ENCODE measurements at regions of chr2 and their contacts with region 1.

Region 1: GRCh38 chr2:101983928-101984327 is 7.8 kb upstream of the IL1R2 start:
- DNase-seq: peak; percentile 60
- H3K4me3 Mint-ChIP-seq: no peak overlapping the region
- H3K27ac Mint-ChIP-seq: no peak overlapping the region
- H3K4me1 Mint-ChIP-seq: peaks cover 42% of the 10 kb centered on the region
- H3K27me3 Mint-ChIP-seq: no peaks in the 10 kb centered on the region
- CTCF ChIP-seq: peak; percentile 33

Region 2: DNA sequence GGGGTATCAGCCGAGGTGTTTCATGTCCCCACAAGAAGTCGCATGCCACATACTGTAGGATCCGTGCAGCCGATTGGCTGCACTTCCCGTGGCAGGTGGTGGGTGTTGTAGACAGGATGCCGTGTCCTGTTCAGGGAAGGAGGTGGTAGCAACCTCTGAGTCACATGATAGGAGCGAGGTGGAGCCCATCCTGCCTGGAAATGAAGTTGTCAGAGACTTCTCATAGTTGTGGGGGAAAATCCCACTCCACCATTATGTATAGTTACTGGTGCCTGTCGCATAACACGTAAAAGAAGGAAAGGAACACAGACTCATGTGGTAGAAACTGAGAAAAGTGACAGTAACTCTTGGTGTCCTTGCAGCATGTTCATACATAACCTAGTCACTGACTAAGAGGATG is 83.6 kb before region 1 on chr2:
- CTCF ChIA-PET with region 1: no interaction called
- POLR2A ChIA-PET with region 1: no interaction called
- intact Hi-C with region 1: loop called (anchors 5 kb)
- DNase-seq: no peak
- H3K4me3 Mint-ChIP-seq: no peak overlapping the region
- H3K27ac Mint-ChIP-seq: no peak overlapping the region
- H3K4me1 Mint-ChIP-seq: peaks cover 9% of the 10 kb centered on the region
- H3K27me3 Mint-ChIP-seq: no peaks in the 10 kb centered on the region
- CTCF ChIP-seq: no peak

Measured in MCF 10A (cell line).